B cell (primary cell): ENCODE measurements at regions of chr1 and their contacts with region 1.

Region 1: GRCh38 chr1:155117617-155118016 is 10.1 kb upstream of the EFNA1 start:
- DNase-seq: no peak
- ATAC-seq: no peak
- H3K4me3 ChIP-seq: no peak overlapping the region
- H3K4me3 Mint-ChIP-seq: no peak overlapping the region
- H3K27ac ChIP-seq: no peak overlapping the region
- H3K27ac Mint-ChIP-seq: no peak overlapping the region
- H3K4me1 ChIP-seq: no peaks in the 10 kb centered on the region
- H3K4me1 Mint-ChIP-seq: no peaks in the 10 kb centered on the region
- H3K27me3 ChIP-seq: peaks cover 0 to 5% (median 2%) of the 10 kb centered on the region in 4 experiments
- H3K27me3 Mint-ChIP-seq: peaks cover 38% of the 10 kb centered on the region
- CTCF ChIP-seq: no peak

Region 2: GRCh38 chr1:154062309-154062708 is 1055.3 kb before region 1 on chr1:
- CTCF ChIA-PET with region 1: no interaction called
- POLR2A ChIA-PET with region 1: interaction called, 10 read pairs
- intact Hi-C with region 1: no loop called
- DNase-seq: no peak
- ATAC-seq: no peak
- H3K4me3 ChIP-seq: no peak overlapping the region
- H3K4me3 Mint-ChIP-seq: no peak overlapping the region
- H3K27ac ChIP-seq: no peak overlapping the region
- H3K27ac Mint-ChIP-seq: no peak overlapping the region
- H3K4me1 ChIP-seq: no peaks in the 10 kb centered on the region
- H3K4me1 Mint-ChIP-seq: no peaks in the 10 kb centered on the region
- H3K27me3 ChIP-seq: peaks cover 0 to 7% (median 4%) of the 10 kb centered on the region in 4 experiments
- H3K27me3 Mint-ChIP-seq: peaks cover 17% of the 10 kb centered on the region
- CTCF ChIP-seq: no peak

Region 3: DNA sequence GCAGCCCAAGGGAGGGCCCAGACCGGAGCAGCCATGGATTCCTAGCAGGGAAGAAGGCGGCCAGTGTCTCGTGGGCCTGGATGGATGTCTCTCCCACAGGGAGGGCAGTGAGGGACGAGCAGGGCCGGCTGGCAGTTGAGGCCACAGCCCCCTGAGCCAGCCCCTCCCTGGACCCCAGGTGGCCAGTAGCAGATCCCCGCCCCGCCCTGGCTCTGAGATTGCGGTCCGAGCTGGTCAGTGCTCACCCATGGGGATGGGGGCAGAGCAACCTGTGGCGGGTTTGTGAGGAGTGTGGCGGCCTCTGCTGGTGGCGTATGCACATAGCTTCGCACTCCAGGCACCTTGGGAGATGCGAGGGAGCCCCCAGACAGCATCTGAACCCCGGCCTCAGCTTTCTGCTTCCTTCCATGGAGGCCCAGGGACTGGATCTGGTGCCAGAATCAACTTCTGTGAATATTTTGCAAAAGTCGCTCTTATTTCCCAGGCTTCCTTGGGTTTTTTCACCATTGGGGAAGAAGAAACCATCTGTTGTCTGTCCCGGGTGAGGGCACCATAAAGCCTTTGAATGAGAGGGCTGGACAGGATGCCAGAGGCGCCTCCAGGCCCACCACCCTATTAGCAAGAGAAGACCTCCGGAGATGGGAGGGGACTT is 239.1 kb before region 1 on chr1:
- CTCF ChIA-PET with region 1: no interaction called
- POLR2A ChIA-PET with region 1: no interaction called
- intact Hi-C with region 1: no loop called
- DNase-seq: peak; percentile 78
- ATAC-seq: peak; percentile 93
- H3K4me3 ChIP-seq: no peak overlapping the region
- H3K4me3 Mint-ChIP-seq: no peak overlapping the region
- H3K27ac ChIP-seq: no peak overlapping the region
- H3K27ac Mint-ChIP-seq: no peak overlapping the region
- H3K4me1 ChIP-seq: peaks cover 0 to 2% of the 10 kb centered on the region in 2 donors
- H3K4me1 Mint-ChIP-seq: no peaks in the 10 kb centered on the region
- H3K27me3 ChIP-seq: no peaks in the 10 kb centered on the region
- H3K27me3 Mint-ChIP-seq: no peaks in the 10 kb centered on the region
- CTCF ChIP-seq: peak; percentile 89